ENCODE measurements at regions of chr17 and their contacts with region 1.

Region 1: GRCh38 chr17:81222906-81223761 is at the start of gene CEP131:
- DNase-seq: peak; percentile 96 to 100 (median 98)
- ATAC-seq: peak; percentile 96
- H3K4me3 ChIP-seq: peak within 1 kb of the TSS; percentile 60
- H3K4me3 Mint-ChIP-seq: peak within 1 kb of the TSS; percentile 74 to 89 (median 86)
- H3K27ac ChIP-seq: peak within 1 kb of the TSS; percentile 68
- H3K27ac Mint-ChIP-seq: peak within 1 kb of the TSS; percentile 7 to 84 (median 74)
- H3K4me1 ChIP-seq: peaks cover 11 to 19% of the 10 kb centered on the region in 2 donors
- H3K4me1 Mint-ChIP-seq: peaks cover 13 to 24% (median 20%) of the 10 kb centered on the region in 7 donors
- H3K27me3 ChIP-seq: no peaks in the 10 kb centered on the region
- H3K27me3 Mint-ChIP-seq: peaks cover 0 to 8% (median 0%) of the 10 kb centered on the region in 5 donors
- total RNA-seq, gene CEP131: 8.1 to 13.0 (median 10.0) TPM

Region 2: DNA sequence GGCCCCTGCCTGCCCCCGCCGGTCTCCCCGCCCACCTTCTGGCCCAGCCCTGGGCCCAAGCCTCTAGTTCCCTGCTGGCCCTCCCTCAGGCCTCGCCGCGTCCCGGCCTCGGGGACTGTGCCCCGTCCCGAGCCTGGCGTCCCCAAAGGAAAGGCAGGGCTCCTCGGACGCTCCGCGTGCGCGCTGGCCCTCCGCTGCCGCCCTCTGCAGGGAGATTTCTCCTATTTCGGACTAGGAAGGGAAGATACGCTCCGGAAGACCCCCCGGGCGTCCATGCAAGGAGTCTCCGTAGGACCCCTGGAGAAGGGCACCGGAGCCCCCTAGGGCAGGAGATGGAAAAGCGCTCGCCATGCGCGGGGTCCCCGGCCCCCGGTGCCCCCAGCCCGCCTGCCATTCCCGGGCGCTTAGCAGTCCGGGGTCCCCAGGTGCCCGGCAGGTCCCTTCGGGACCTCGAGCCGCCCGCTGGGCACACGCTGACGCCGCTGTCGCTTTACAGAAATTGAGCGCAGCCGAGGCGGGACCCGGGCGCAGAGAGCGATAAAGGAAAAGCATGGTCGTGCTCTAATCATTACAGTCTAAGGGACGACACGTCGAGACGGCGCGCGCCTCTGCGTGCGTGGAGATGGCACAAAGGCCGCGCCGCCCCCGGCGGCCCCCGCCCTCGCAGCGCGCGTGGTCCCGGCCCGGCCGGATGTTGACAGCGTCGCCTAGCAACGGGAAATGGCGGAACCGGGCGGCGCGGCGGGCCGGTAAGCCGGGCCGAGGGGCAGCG is 1187.0 kb before region 1 on chr17 and contains the start of gene CCDC40:
- CTCF ChIA-PET with region 1: no interaction called
- POLR2A ChIA-PET with region 1: no interaction called
- intact Hi-C with region 1: loop called in 1 of 2 experiments (anchors 5 kb)
- DNase-seq: peak; percentile 66 to 85 (median 78)
- ATAC-seq: peak; percentile 91
- H3K4me3 ChIP-seq: peak within 1 kb of the TSS; percentile 81
- H3K4me3 Mint-ChIP-seq: peak within 1 kb of the TSS; percentile 78 to 94 (median 85)
- H3K27ac ChIP-seq: peak within 1 kb of the TSS; percentile 76
- H3K27ac Mint-ChIP-seq: peak within 1 kb of the TSS; percentile 60 to 96 (median 84)
- H3K4me1 ChIP-seq: peaks cover 4 to 6% of the 10 kb centered on the region in 2 donors
- H3K4me1 Mint-ChIP-seq: peaks cover 5 to 18% (median 9%) of the 10 kb centered on the region in 7 donors
- H3K27me3 ChIP-seq: peaks cover 0 to 3% of the 10 kb centered on the region in 2 donors
- H3K27me3 Mint-ChIP-seq: peaks cover 0 to 63% (median 10%) of the 10 kb centered on the region in 5 donors
- total RNA-seq, gene CCDC40: 0.43 to 3.0 (median 0.79) TPM

Region 3: GRCh38 chr17:80263253-80264204 is 959.6 kb before region 1 on chr17:
- CTCF ChIA-PET with region 1: no interaction called
- POLR2A ChIA-PET with region 1: no interaction called
- intact Hi-C with region 1: loop called (anchors 2 to 10 kb)
- DNase-seq: peak; percentile 40 to 89 (median 77)
- ATAC-seq: peak; percentile 46
- H3K4me3 ChIP-seq: peak overlapping the region; percentile 75
- H3K4me3 Mint-ChIP-seq: peak overlapping the region; percentile 77 to 99 (median 96)
- H3K27ac ChIP-seq: peak overlapping the region; percentile 93
- H3K27ac Mint-ChIP-seq: peak overlapping the region; percentile 89 to 98 (median 94)
- H3K4me1 ChIP-seq: peaks cover 47 to 54% of the 10 kb centered on the region in 2 donors
- H3K4me1 Mint-ChIP-seq: peaks cover 33 to 57% (median 46%) of the 10 kb centered on the region in 7 donors
- H3K27me3 ChIP-seq: no peaks in the 10 kb centered on the region
- H3K27me3 Mint-ChIP-seq: peaks cover 0 to 2% (median 0%) of the 10 kb centered on the region in 5 donors

Region 4: DNA sequence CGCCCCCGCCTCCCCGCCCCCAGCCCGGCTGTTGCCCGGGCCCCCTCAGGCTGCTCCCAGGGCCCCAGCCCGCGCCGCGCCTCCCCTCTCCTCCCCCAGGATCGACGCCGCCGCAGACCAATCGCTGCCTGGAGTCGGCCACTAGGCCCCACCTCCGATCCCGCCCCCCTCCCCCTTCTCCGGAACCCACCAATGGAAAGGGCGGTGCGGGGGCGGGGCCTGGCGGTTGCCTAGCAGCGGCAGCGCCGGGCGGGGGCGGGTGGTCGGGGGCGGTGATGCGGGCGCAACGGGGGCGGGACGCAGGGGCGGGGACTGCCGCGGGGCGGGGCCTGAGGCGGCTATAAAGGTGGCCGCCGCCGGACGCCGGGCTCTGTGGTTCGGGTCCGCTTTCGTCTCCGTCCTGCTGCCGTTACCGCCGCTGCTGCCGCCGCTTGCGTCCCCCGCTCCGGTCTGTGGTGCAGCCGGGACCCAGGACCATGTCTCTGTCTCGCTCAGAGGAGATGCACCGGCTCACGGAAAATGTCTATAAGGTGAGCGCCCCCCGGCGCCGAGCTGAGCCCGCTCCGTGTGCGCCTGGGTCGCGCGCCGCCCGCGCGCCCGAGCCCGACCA is 188.2 kb before region 1 on chr17 and contains the start of gene BAIAP2:
- CTCF ChIA-PET with region 1: no interaction called
- POLR2A ChIA-PET with region 1: no interaction called
- intact Hi-C with region 1: loop called (anchors 1 kb)
- DNase-seq: peak; percentile 88 to 95 (median 94)
- ATAC-seq: peak; percentile 94
- H3K4me3 ChIP-seq: peak within 1 kb of the TSS; percentile 53
- H3K4me3 Mint-ChIP-seq: peak within 1 kb of the TSS; percentile 87 to 96 (median 92)
- H3K27ac ChIP-seq: peak within 1 kb of the TSS; percentile 67
- H3K27ac Mint-ChIP-seq: peak within 1 kb of the TSS in 8 of 9 donors; percentile 49 to 93 (median 87)
- H3K4me1 ChIP-seq: peaks cover 0 to 9% of the 10 kb centered on the region in 2 donors
- H3K4me1 Mint-ChIP-seq: peaks cover 5 to 27% (median 19%) of the 10 kb centered on the region in 7 donors
- H3K27me3 ChIP-seq: no peaks in the 10 kb centered on the region
- H3K27me3 Mint-ChIP-seq: peaks cover 0 to 50% (median 0%) of the 10 kb centered on the region in 5 donors
- total RNA-seq, gene BAIAP2: 7.3 to 13.7 (median 12.3) TPM

Region 5: DNA sequence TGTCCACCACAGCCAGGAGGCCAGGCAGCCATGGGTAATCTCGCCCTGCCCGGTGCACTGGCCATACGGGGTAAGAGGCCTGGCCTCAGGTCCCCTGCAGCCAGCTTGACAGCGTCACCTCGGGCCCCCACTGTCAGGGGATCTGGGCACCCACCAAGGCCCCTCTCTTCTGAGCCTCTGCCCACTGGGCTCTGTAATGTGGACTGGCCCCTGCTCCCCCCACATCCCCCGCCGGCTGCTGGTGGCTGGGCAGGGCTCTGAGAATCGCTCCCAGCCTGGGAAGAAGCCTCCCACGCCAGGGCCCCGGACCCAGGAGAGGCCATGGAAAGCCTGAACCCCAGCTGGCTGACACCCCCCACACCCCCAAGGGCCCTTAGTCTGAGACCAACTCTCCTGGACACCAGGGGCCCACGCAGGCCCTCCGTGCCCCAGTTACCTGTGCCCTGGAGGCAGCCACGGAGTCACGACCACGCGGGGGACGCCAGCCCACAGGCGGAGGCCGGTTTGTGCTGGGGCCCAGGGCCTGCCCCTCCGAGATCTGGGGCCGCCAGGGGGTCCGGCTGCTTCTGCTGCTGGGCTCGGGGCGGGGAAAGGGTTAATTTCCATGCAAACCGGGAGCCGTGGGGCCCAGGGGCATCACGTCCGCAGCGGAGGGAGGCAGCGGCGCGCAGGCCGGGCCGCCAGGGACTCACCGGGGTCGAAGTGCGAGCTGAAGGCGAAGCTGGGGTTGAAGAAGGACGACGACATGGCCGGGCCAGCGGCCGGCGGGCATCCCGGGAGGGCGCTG is 57.7 kb before region 1 on chr17 and contains the start of gene PVALEF:
- CTCF ChIA-PET with region 1: no interaction called
- POLR2A ChIA-PET with region 1: no interaction called
- intact Hi-C with region 1: no loop called
- DNase-seq: no peak
- ATAC-seq: no peak
- H3K4me3 ChIP-seq: no peak within 1 kb of the TSS
- H3K4me3 Mint-ChIP-seq: peak within 1 kb of the TSS in 6 of 10 donors; percentile 23 to 76 (median 32)
- H3K27ac ChIP-seq: no peak within 1 kb of the TSS
- H3K27ac Mint-ChIP-seq: no peak within 1 kb of the TSS
- H3K4me1 ChIP-seq: no peaks in the 10 kb centered on the region
- H3K4me1 Mint-ChIP-seq: peaks cover 0 to 5% (median 0%) of the 10 kb centered on the region in 7 donors
- H3K27me3 ChIP-seq: no peaks in the 10 kb centered on the region
- H3K27me3 Mint-ChIP-seq: peaks cover 0 to 21% (median 17%) of the 10 kb centered on the region in 5 donors
- total RNA-seq, gene PVALEF: not detected

Region 6: DNA sequence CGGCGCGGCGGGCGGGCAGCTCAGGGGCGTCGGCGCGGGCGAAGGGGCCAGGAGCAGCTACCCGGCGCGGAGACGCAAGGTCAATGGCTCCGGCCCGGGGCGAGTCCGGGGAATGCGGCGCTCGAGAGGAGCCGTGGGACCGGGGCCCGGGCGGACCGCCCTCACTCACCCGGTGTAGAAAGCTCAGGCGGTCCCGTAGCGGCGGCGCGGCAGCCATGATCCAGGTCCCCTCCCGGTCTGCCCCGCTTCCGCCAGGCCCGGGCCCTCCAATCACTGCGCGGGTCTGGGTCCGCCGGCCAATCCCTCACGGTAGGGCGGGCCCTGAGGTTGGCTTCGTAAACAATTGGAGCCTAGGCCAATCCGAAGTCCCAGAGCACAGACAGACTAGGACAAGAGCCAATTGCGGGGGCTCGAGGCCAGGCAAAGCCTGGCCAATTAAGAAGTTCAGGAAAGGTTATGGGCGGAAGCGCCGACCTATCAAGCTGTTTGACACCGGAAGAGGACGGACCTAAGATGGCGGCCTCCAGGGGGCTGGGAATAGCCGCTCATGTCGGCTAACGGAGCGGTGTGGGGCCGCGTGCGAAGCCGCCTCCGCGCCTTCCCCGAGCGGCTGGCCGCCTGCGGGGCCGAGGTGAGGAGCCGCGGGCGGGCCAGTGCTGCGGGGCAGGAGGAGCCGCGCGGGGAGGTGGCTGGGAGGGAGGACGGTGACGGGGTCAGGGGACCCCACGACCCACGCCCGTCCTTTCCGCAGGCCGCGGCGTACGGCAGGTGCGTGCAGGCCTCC is 15.9 kb after region 1 on chr17 and contains the starts of genes NDUFAF8 and TEPSIN:
- CTCF ChIA-PET with region 1: no interaction called
- POLR2A ChIA-PET with region 1: interaction called, 24 read pairs
- intact Hi-C with region 1: loop called (anchors 1 kb)
- DNase-seq: peak; percentile 87 to 98 (median 97)
- ATAC-seq: peak; percentile 98
- H3K4me3 ChIP-seq: peak within 1 kb of the TSS; percentile 71
- H3K4me3 Mint-ChIP-seq: peak within 1 kb of the TSS; percentile 92 to 97 (median 95)
- H3K27ac ChIP-seq: peak within 1 kb of the TSS; percentile 79
- H3K27ac Mint-ChIP-seq: peak within 1 kb of the TSS; percentile 86 to 95 (median 90)
- H3K4me1 ChIP-seq: peaks cover 22 to 24% of the 10 kb centered on the region in 2 donors
- H3K4me1 Mint-ChIP-seq: peaks cover 17 to 51% (median 38%) of the 10 kb centered on the region in 7 donors
- H3K27me3 ChIP-seq: no peaks in the 10 kb centered on the region
- H3K27me3 Mint-ChIP-seq: no peaks in the 10 kb centered on the region
- total RNA-seq, gene NDUFAF8: 34.2 to 45.6 (median 43.5) TPM
- total RNA-seq, gene TEPSIN: 52.6 to 115 (median 90.0) TPM

Region 7: GRCh38 chr17:81346090-81346907 is 123.2 kb after region 1 on chr17:
- CTCF ChIA-PET with region 1: no interaction called
- POLR2A ChIA-PET with region 1: no interaction called
- intact Hi-C with region 1: loop called in 1 of 2 experiments (anchors 1 kb)
- DNase-seq: peak; percentile 88 to 94 (median 92)
- ATAC-seq: peak; percentile 97
- H3K4me3 ChIP-seq: peak overlapping the region; percentile 44
- H3K4me3 Mint-ChIP-seq: peak overlapping the region; percentile 16 to 74 (median 58)
- H3K27ac ChIP-seq: no peak overlapping the region
- H3K27ac Mint-ChIP-seq: no peak overlapping the region
- H3K4me1 ChIP-seq: peaks cover 17 to 31% of the 10 kb centered on the region in 2 donors
- H3K4me1 Mint-ChIP-seq: peaks cover 10 to 29% (median 16%) of the 10 kb centered on the region in 7 donors
- H3K27me3 ChIP-seq: peaks cover 3 to 32% of the 10 kb centered on the region in 2 donors
- H3K27me3 Mint-ChIP-seq: peaks cover 26 to 57% (median 32%) of the 10 kb centered on the region in 5 donors

Region 8: GRCh38 chr17:81593105-81593871 is 370.2 kb after region 1 on chr17:
- CTCF ChIA-PET with region 1: no interaction called
- POLR2A ChIA-PET with region 1: no interaction called
- intact Hi-C with region 1: no loop called
- DNase-seq: no peak
- ATAC-seq: no peak
- H3K4me3 ChIP-seq: no peak overlapping the region
- H3K4me3 Mint-ChIP-seq: no peak overlapping the region
- H3K27ac ChIP-seq: no peak overlapping the region
- H3K27ac Mint-ChIP-seq: peak overlapping the region in 2 of 9 donors; percentile 23 to 51
- H3K4me1 ChIP-seq: no peaks in the 10 kb centered on the region
- H3K4me1 Mint-ChIP-seq: peaks cover 0 to 3% (median 0%) of the 10 kb centered on the region in 7 donors
- H3K27me3 ChIP-seq: no peaks in the 10 kb centered on the region
- H3K27me3 Mint-ChIP-seq: no peaks in the 10 kb centered on the region

Measured in naive thymus-derived CD4-positive, alpha-beta T cell (primary cell).